ENCODE measurements at regions of chr12 and their contacts with region 1.

Region 1: DNA sequence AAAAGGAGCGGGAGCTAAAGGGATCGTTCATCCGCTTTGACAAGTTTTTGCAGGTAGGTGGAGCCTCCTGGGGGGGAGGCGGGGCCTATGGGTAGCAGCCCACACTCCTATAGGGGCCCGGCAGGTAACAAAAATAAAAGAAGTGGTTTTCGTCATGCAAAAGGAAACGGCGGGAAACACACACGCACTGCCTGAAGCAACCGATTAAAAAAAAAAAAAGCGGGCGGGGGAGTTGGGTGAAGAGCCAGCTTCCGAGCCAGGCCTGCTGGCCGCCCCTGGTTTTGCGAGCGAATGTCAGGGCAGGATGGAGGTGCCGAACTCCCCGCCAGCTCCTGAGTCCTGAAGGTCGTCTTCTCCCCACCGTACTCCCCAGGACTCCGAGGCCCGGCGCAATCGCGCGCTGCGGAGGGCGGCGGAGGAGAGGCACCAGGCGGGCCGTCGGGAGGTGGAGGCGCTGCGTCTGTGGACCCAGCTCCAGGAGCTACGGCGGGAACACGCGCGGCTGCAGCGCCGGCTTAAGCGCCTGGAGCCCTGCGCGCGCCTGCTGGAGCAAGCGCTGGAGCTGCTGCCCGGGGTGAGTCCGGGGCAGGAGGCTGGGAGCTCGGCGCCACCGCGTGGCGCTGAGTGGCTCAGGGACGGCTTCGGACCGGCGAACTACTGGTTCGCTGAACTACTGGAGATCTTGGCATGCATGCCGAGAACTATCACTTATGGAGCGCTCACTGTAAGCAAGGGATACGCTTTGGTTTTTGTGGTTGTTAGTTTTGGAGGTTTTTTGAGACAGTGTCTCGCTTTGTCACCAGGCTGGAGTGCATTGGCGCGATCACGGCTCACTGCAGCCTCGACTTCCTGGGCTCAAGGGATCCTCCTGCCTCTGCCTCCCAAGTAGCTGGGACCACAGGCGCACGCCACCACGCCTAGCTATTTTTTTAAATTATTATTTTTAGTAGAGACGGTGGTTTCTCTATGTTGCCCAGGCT is 3.6 kb downstream of the CFAP73 start:
- DNase-seq: peak; percentile 68
- H3K4me3 Mint-ChIP-seq: peak overlapping the region; percentile 69
- H3K27ac Mint-ChIP-seq: peak overlapping the region; percentile 83
- H3K4me1 Mint-ChIP-seq: peaks cover 29% of the 10 kb centered on the region
- H3K27me3 Mint-ChIP-seq: peaks cover 18% of the 10 kb centered on the region

Region 2: GRCh38 chr12:113135178-113136127 is 17.7 kb before region 1 on chr12 and contains the start of gene RASAL1:
- CTCF ChIA-PET with region 1: interaction called, 22 read pairs
- POLR2A ChIA-PET with region 1: no interaction called
- DNase-seq: peak; percentile 67
- H3K4me3 Mint-ChIP-seq: peak within 1 kb of the TSS; percentile 68
- H3K27ac Mint-ChIP-seq: peak within 1 kb of the TSS; percentile 73
- H3K4me1 Mint-ChIP-seq: peaks cover 18% of the 10 kb centered on the region
- H3K27me3 Mint-ChIP-seq: peaks cover 4% of the 10 kb centered on the region
- total RNA-seq, gene RASAL1: 0.20 to 0.40 TPM

Region 3: GRCh38 chr12:113174461-113175384 is 21.6 kb after region 1 on chr12:
- CTCF ChIA-PET with region 1: interaction called, 13 read pairs
- POLR2A ChIA-PET with region 1: interaction called, 3 read pairs
- DNase-seq: peak; percentile 77
- H3K4me3 Mint-ChIP-seq: no peak overlapping the region
- H3K27ac Mint-ChIP-seq: no peak overlapping the region
- H3K4me1 Mint-ChIP-seq: peaks cover 2% of the 10 kb centered on the region
- H3K27me3 Mint-ChIP-seq: no peaks in the 10 kb centered on the region

Region 4: DNA sequence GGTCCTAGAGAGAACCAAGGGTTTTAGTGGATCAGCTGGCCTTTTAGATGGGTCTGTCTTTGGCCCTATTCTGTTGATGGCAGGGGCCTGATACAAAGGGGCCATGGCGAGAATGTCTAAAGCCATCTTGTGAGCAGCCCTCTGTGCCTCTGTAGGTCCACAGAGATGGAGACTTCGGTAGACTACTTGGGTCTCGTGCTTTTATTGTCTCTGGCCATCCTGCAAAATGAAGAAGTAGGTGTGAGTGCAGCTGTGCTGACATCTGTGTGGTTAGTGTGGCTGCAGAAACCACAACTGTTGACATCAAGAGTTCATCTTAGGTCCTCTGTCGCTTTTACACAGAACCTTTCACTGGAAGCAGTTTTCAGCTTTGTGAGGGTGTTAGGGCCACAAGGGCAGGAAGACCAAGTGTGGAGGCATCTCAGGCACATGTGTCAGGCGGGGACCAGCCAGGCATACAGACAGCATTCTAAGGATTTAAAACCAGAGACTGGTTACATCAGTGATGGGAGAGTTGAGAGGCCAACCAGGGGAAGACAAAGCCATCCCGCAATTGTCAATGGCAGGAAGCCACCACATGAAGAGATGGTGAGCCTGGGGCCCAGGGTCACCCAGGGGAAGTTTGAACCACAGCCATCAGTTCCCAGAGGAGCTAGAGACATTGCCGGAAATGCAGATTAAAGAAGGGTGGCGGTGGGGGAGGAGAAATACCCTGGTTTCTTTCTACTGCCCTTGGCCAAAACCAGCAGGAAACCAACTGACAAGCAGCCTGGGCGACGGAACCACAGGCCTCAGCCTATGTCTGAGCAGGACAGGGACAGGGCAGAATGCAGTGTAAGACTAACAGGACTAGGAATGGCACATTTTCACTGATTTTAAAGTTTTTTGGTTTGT is 55.2 kb after region 1 on chr12:
- CTCF ChIA-PET with region 1: no interaction called
- POLR2A ChIA-PET with region 1: no interaction called
- DNase-seq: peak; percentile 82
- H3K4me3 Mint-ChIP-seq: peak overlapping the region; percentile 47
- H3K27ac Mint-ChIP-seq: peak overlapping the region; percentile 88
- H3K4me1 Mint-ChIP-seq: peaks cover 57% of the 10 kb centered on the region
- H3K27me3 Mint-ChIP-seq: no peaks in the 10 kb centered on the region